ENCODE measurements at regions of chr12 and their contacts with region 1.

Region 1: DNA sequence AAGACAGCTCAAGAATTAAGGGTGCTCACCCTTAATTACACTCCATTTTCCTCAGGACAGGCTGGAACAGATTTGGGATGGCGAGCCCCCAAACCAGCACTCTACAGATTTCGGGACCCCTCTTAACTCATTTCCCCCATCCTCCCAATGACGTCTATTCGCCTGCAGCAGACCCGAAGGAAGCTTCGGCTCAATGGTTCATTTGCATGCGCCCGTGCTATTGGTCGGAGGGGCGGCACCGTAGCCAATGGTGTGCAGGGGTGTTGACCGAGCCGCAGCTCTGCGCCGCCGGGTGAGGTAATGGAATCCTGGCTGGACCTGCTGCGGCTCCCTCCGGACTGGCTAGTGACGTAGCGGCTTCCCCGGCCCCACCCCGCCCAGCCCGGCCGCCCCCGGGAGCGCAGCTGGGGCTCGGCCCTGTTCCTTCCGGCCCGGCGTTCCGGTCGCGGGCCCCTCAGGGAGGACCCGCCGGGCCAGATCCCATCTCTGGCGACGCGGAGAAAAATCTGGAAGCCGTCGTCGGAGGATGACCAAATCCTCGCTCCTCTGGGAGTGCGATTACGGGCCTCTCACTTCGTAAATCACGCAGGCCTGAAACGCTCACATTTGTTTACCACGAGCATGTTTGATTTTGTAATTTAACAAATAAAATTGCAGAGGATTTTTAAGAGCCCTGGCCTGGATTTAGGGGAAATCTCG is 18.3 kb upstream of the NR4A1 start:
- DNase-seq: peak; percentile 86
- H3K4me3 ChIP-seq: peak overlapping the region; percentile 31
- H3K27me3 ChIP-seq: no peaks in the 10 kb centered on the region
- CTCF ChIP-seq: no peak

Region 2: GRCh38 chr12:52004042-52004648 is 28.8 kb before region 1 on chr12:
- CTCF ChIA-PET with region 1: interaction called, 674 read pairs
- POLR2A ChIA-PET with region 1: no interaction called
- DNase-seq: no peak
- H3K4me3 ChIP-seq: no peak overlapping the region
- H3K27me3 ChIP-seq: peaks cover 6% of the 10 kb centered on the region; the same call in 1 of the 2 replicates
- CTCF ChIP-seq: peak; percentile 85

Region 3: DNA sequence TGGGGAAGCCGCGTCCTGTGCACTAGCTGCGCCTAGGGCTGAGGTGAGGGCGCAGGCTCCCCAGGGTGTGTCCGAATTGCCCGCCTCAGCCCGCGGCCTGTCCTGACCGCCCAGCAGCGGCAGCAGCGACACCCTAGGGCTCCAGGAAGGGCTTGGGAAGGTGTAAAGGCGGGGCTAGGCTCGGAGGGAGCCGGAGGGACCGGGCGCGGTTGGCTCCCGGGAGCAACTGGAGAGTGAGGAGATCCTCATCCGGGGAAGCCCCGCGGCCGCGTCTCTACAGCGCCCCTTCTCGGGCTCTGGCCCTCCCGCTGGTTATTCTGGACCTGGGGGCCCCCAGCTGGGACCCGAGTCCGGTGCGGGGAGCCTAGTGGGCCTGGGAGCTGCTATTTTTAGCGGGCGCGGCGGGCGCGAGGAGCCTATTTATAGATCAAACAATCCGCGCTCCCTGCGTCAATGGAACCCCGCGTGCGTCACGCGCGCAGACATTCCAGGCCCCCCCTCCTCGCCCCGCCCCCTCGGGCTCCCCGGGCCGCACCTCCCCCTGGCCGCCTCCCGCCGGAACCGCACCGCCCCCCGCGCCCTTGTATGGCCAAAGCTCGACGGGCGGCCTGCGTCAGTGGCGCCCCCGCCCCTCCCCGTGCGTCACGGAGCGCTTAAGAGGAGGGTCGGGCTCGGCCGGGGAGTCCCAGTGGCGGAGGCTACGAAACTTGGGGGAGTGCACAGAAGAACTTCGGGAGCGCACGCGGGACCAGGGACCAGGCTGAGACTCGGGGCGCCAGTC is 18.0 kb after region 1 on chr12 and contains the start of gene NR4A1:
- CTCF ChIA-PET with region 1: interaction called, 7 read pairs
- POLR2A ChIA-PET with region 1: interaction called, 20 read pairs
- DNase-seq: peak; percentile 60
- H3K4me3 ChIP-seq: peak within 1 kb of the TSS; percentile 63
- H3K27me3 ChIP-seq: no peaks in the 10 kb centered on the region
- CTCF ChIP-seq: peak; percentile 25; the same call in 1 of the 2 replicates
- polyA plus RNA-seq, gene NR4A1: 9.8 and 18.6 TPM in 2 replicates

Region 4: DNA sequence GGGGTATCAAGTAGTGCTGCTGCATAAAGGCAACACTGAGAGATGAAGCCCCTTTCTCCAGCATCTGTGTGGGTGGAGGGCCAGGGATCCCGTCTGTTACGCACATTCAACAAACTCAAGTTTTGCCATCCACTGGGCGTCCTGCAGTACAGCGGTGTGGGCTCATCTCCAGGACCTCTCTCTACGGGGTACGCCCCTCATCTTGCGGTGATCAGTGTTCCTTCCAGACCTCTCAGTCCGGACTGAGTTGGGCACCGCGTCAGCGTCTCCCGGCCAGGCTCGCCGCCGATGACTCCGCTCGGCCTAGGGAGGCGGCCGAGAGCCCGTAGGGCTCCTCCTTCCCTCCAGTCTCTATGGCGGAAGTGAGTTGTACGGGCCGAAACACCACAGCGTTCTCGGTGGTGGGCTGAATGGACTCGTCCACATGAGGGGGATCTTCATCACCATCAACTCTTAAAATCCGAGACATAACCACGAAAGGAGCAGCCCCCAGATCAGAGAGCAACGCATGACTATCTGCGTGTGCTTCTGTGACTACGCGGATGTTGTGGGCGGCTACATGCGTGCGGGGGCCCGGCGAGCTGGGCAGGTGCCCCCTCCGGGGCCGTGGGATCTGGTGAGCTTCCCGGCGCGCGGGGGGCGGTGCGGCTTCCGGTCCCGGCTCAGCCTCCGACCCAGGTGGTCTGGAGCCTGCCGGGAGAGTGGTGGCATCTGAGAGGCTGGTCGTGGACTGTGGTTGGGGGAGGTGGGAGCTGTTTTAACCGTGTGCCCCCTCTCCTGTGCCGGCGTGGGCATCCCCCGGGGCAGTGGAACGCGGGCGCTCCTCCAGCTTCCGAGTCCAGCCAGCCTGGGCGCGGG is 36.6 kb after region 1 on chr12 and contains the start of gene ATG101:
- CTCF ChIA-PET with region 1: interaction called, 974 read pairs
- POLR2A ChIA-PET with region 1: no interaction called
- DNase-seq: peak; percentile 45
- H3K4me3 ChIP-seq: peak within 1 kb of the TSS; percentile 58
- H3K27me3 ChIP-seq: no peaks in the 10 kb centered on the region
- CTCF ChIP-seq: peak; percentile 91
- polyA plus RNA-seq, gene ATG101: 115 and 163 TPM in 2 replicates

Region 5: DNA sequence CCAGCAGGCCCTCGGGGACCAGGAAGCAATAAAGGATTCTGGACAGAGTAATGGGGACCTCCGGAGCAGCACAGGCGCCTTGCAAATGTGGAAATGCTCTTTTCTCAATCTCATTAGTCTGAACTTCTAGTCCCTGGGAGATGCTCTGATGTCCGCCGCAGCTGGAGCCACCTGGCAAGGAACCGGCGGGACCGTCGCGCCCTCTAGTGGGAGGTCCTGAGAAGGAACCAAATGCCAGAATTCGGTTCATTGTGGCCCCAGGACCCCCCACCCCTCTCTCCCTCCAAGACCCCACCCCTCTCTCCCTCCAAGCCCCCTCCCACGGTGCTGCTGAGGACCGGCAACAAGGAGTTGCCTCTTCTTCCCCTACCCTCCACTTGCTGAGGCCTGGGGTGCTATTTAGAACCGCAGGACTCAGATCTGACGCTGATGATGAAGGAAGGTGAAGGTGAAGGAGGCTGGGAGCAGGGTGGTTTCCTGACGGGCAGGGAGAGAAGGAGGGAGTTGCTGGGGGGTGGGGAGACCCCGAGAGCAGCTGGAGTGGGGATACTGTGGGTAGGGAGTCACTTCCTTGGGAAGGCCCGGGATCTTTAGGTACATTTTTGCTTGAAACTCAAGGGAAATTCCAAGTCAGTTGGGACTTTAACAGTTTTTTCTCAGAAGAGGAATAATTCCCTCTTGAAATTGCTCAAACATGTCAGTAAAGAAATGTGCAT is 89.0 kb after region 1 on chr12:
- CTCF ChIA-PET with region 1: interaction called, 10 read pairs
- POLR2A ChIA-PET with region 1: no interaction called
- DNase-seq: no peak
- H3K4me3 ChIP-seq: no peak overlapping the region
- H3K27me3 ChIP-seq: peaks cover 2% of the 10 kb centered on the region
- CTCF ChIP-seq: peak; percentile 83

Region 6: DNA sequence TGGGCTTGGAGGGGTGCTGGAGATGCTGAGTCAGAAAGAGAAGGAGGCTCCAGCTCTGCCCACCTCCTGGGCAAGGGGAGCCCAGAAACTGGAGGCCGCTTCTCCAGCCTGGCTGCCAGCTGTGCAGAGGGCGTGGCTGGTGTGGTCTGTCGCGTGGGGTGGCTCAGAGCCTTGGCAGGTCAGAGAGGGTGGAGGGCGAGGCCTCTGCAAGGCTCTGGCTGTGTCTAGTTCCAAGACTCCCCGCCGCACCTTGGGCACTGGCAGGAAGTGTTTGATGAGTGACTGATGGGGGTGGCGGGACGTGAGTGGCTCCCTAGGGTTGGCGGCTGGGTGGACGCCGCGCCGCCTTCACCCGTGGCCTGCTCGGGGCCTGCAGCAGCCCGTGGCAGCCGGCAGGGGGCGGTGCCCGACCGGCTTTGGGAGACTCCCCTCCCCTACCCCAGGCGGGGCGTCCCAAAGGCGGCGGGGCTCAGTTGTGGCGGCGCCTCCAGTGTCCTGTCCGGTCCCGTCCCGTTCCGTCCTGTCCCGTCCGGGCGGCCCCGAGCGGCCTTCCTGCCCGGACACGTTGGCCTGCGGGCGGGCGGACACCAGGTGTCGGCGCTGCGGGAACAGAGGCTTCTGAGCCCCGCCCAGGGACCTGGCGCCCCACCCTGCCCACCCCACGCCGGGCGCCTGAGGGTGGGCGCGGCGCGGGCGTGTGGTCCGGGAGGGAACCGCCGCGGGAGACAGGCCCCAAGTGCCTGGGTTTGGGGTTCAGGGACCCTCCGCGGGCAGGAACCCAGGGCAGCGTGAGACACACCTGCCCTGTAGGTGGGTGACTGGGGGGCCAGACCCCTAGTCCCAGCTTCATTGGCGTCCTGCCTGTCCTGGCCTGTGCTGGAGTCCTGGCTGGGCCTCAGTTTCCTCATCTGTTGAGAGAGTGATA is 119.2 kb after region 1 on chr12:
- CTCF ChIA-PET with region 1: no interaction called
- POLR2A ChIA-PET with region 1: no interaction called
- DNase-seq: no peak
- H3K4me3 ChIP-seq: peak overlapping the region; percentile 37
- H3K27me3 ChIP-seq: no peaks in the 10 kb centered on the region
- CTCF ChIP-seq: peak; percentile 72